ENCODE measurements at regions of chr10 and their contacts with region 1.

Region 1: DNA sequence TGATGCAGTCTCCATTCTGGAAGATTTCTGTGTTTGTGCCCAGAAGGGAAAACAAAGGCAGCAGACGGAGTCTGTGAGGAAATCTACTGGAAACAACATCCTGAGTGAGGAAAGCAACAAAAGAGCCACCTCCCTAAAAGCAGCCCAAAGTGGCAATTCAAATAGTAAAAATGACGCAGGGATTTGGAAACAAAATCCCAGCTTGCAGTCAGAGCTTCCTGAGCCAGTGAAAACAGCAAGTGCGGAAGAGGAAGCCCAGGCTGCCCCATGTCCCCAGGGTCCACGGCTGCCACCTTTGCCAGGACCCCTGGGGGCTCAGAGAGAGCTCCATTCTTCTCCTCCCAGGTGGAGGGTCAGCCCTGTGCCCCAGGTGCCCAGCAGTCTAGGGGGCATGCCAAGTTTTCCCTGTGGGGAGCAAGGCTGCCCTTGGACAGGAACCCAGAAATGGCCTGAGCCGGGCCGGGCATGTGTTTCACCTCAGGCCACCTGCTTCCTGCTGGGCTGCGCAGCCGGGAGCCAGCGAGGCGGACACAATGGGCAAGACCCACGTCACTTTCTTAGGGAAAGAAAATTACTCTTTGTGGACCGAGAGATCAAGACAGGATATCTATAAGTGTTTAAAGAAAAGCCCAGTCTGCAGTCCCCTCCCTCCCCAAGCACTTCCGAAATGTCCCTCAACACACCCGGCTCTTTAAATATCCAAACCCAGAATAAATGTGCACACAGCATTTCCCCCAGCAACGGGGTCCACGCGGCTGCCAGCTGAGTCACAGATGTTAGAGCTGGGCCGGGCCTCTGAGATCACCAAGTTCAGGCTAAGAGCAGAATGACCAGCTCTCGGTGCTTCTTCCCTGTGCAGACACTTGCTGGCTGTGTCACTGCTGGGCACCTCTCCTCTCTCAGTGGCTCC is 231.1 kb downstream of the ARHGAP12 start:
- DNase-seq: peak; percentile 71
- H3K4me3 ChIP-seq: no peak overlapping the region
- H3K27me3 ChIP-seq: no peaks in the 10 kb centered on the region
- CTCF ChIP-seq: no peak

Region 2: DNA sequence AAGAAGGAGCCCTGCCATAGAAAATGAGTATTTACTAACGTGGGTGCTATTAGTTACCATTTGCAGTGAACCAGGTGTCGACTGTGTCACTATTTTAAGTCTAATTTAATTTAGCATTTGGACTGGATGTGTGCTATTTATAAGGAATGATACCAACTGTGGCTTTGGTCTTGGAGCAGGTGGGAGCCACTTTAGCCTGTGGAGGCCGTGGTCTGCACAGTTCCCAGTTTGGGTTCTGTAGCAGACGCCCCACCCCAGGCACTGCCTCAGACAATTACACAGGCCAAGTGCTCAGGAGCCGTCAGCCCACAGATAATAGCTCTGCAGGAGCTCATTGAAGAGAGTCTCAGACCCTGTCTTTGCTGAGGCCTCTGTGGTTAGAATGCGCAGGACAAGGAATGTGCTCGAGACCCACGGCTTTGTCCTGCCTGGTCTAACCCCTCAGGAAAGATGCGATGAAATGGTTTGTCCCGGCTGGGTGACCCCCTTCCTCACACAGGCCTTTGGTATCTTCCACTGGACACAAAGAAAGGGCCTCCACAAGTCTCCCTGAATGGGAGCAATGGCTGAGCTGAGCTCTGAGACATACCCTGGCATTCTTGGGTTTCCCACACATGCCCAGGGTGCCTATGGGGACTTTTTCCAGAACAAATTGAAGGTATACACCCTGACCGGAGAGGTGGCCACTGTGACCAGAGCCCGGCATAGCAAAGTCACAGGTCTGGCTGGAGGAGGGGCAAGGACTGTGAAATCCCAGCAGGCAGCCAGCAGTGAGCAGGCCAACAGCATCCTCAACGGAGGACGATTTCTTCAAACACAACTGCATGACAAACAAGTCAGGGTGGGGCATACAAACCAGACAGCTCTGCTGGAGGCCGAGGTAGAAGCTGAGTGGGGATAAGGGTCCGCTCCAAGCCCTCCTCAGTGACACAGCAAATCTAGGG is 20.1 kb before region 1 on chr10:
- CTCF ChIA-PET with region 1: interaction called, 11 read pairs
- POLR2A ChIA-PET with region 1: no interaction called
- DNase-seq: no peak
- H3K4me3 ChIP-seq: no peak overlapping the region
- H3K27me3 ChIP-seq: no peaks in the 10 kb centered on the region
- CTCF ChIP-seq: no peak